AG04450 (cell line): ENCODE measurements at regions of chr19 and their contacts with region 1.

Region 1: GRCh38 chr19:7852851-7853769 is 21.1 kb downstream of the PRR36 start:
- DNase-seq: no peak
- H3K4me3 ChIP-seq: no peak overlapping the region
- H3K27ac ChIP-seq: no peak overlapping the region
- H3K27me3 ChIP-seq: no peaks in the 10 kb centered on the region
- CTCF ChIP-seq: peak; percentile 80

Region 2: GRCh38 chr19:7355151-7355820 is 497.8 kb before region 1 on chr19:
- CTCF ChIA-PET with region 1: no interaction called
- POLR2A ChIA-PET with region 1: no interaction called
- DNase-seq: no peak
- H3K4me3 ChIP-seq: no peak overlapping the region
- H3K27ac ChIP-seq: no peak overlapping the region
- H3K27me3 ChIP-seq: peaks cover 11% of the 10 kb centered on the region
- CTCF ChIP-seq: no peak

Region 3: DNA sequence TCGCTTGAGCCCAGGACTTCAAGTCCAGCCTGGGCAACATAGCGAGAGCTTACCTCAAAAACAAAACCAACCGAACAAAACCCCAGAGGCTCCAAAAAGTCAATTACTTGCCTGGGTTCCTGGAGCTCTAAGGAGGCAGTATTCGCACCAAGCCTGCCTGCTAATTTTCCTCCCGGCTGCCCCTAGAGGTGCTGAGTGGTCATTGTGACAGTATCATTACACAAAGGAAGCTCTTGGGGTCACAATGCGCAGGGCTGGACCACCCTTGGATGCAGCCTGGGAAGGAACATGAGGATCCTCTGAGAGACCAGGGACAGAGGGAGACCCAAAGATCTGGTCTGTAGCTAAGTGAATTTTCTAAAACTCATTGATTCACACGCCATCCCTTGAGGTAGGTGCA is 355.8 kb before region 1 on chr19:
- CTCF ChIA-PET with region 1: no interaction called
- POLR2A ChIA-PET with region 1: no interaction called
- DNase-seq: no peak
- H3K4me3 ChIP-seq: no peak overlapping the region
- H3K27ac ChIP-seq: no peak overlapping the region
- H3K27me3 ChIP-seq: peaks cover 21% of the 10 kb centered on the region
- CTCF ChIP-seq: peak; percentile 48

Region 4: DNA sequence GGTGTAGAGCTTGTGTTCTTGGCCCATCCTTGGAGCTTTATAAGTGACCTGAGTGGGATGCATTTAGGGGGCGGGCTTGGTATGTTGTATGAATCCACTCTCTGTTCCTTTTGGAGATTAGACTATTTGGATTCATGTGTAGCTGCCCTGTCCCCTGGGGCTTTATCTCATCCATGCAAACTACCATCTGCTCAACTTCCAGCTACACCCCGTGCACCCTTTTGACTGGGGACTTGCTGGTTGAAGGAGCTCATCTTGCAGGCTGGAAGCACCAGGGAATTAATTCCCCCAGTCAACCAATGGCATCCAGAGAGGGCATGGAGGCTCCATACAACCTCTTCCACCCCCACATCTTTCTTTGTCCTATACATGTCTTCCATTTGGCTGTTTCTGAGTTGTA is 83.9 kb before region 1 on chr19:
- CTCF ChIA-PET with region 1: no interaction called
- POLR2A ChIA-PET with region 1: no interaction called
- DNase-seq: no peak
- H3K4me3 ChIP-seq: no peak overlapping the region
- H3K27ac ChIP-seq: no peak overlapping the region
- H3K27me3 ChIP-seq: peaks cover 3% of the 10 kb centered on the region
- CTCF ChIP-seq: no peak

Region 5: GRCh38 chr19:7831452-7831851 is 21.7 kb before region 1 on chr19:
- CTCF ChIA-PET with region 1: interaction called, 13 read pairs
- POLR2A ChIA-PET with region 1: no interaction called
- DNase-seq: no peak
- H3K4me3 ChIP-seq: peak overlapping the region; percentile 7; the same call in 1 of the 2 replicates
- H3K27ac ChIP-seq: no peak overlapping the region
- H3K27me3 ChIP-seq: peaks cover 4% of the 10 kb centered on the region
- CTCF ChIP-seq: peak; percentile 48